CD14-positive monocyte (primary cell): ENCODE measurements at regions of chr17 and their contacts with region 1.

Region 1: GRCh38 chr17:48791128-48792032 is 25.6 kb downstream of the TTLL6 start:
- DNase-seq: peak; percentile 19 to 61 (median 40)
- H3K4me3 ChIP-seq: no peak overlapping the region
- H3K4me3 Mint-ChIP-seq: no peak overlapping the region
- H3K27ac ChIP-seq: no peak overlapping the region
- H3K27ac Mint-ChIP-seq: no peak overlapping the region
- H3K4me1 ChIP-seq: peaks cover under 1 to 3% of the 10 kb centered on the region in 2 donors
- H3K4me1 Mint-ChIP-seq: peaks cover 10% of the 10 kb centered on the region
- H3K27me3 ChIP-seq: peaks cover 5 to 22% of the 10 kb centered on the region in 2 donors
- H3K27me3 Mint-ChIP-seq: peaks cover 27 to 64% (median 43%) of the 10 kb centered on the region in 3 donors
- CTCF ChIP-seq: peak; percentile 72

Region 2: GRCh38 chr17:48671697-48672171 is 119.6 kb before region 1 on chr17:
- intact Hi-C with region 1: loop called (anchors 5 kb)
- DNase-seq: peak; percentile 23 to 47 (median 46)
- H3K4me3 ChIP-seq: peak overlapping the region in 1 of 3 experiments; percentile 47
- H3K4me3 Mint-ChIP-seq: peak overlapping the region; percentile 61 to 88
- H3K27ac ChIP-seq: no peak overlapping the region
- H3K27ac Mint-ChIP-seq: peak overlapping the region in 1 of 7 donors; percentile 72
- H3K4me1 ChIP-seq: peaks cover 0 to 5% of the 10 kb centered on the region in 2 donors
- H3K4me1 Mint-ChIP-seq: peaks cover 4% of the 10 kb centered on the region
- H3K27me3 ChIP-seq: peaks cover 2 to 38% of the 10 kb centered on the region in 2 donors
- H3K27me3 Mint-ChIP-seq: peaks cover 23 to 74% (median 30%) of the 10 kb centered on the region in 3 donors
- CTCF ChIP-seq: peak; percentile 79

Region 3: GRCh38 chr17:48678141-48678971 is 113.0 kb before region 1 on chr17:
- intact Hi-C with region 1: loop called (anchors 5 kb)
- DNase-seq: peak; percentile 32 to 49 (median 36)
- H3K4me3 ChIP-seq: no peak overlapping the region
- H3K4me3 Mint-ChIP-seq: peak overlapping the region in 1 of 2 donors; percentile 56
- H3K27ac ChIP-seq: no peak overlapping the region
- H3K27ac Mint-ChIP-seq: peak overlapping the region in 1 of 7 donors; percentile 54
- H3K4me1 ChIP-seq: peaks cover 0 to 3% of the 10 kb centered on the region in 2 donors
- H3K4me1 Mint-ChIP-seq: peaks cover 2% of the 10 kb centered on the region
- H3K27me3 ChIP-seq: peaks cover 19 to 58% of the 10 kb centered on the region in 2 donors
- H3K27me3 Mint-ChIP-seq: peaks cover 37 to 76% (median 48%) of the 10 kb centered on the region in 3 donors
- CTCF ChIP-seq: peak; percentile 98

Region 4: GRCh38 chr17:48860034-48860433 is 68.7 kb after region 1 on chr17:
- intact Hi-C with region 1: no loop called
- DNase-seq: no peak
- H3K4me3 ChIP-seq: no peak overlapping the region
- H3K4me3 Mint-ChIP-seq: no peak overlapping the region
- H3K27ac ChIP-seq: no peak overlapping the region
- H3K27ac Mint-ChIP-seq: no peak overlapping the region
- H3K4me1 ChIP-seq: no peaks in the 10 kb centered on the region
- H3K4me1 Mint-ChIP-seq: no peaks in the 10 kb centered on the region
- H3K27me3 ChIP-seq: no peaks in the 10 kb centered on the region
- H3K27me3 Mint-ChIP-seq: peaks cover 0 to 2% (median 0%) of the 10 kb centered on the region in 3 donors
- CTCF ChIP-seq: peak; percentile 20